SK-N-SH (cell line): ENCODE measurements at regions of chr10 and their contacts with region 1.

Region 1: DNA sequence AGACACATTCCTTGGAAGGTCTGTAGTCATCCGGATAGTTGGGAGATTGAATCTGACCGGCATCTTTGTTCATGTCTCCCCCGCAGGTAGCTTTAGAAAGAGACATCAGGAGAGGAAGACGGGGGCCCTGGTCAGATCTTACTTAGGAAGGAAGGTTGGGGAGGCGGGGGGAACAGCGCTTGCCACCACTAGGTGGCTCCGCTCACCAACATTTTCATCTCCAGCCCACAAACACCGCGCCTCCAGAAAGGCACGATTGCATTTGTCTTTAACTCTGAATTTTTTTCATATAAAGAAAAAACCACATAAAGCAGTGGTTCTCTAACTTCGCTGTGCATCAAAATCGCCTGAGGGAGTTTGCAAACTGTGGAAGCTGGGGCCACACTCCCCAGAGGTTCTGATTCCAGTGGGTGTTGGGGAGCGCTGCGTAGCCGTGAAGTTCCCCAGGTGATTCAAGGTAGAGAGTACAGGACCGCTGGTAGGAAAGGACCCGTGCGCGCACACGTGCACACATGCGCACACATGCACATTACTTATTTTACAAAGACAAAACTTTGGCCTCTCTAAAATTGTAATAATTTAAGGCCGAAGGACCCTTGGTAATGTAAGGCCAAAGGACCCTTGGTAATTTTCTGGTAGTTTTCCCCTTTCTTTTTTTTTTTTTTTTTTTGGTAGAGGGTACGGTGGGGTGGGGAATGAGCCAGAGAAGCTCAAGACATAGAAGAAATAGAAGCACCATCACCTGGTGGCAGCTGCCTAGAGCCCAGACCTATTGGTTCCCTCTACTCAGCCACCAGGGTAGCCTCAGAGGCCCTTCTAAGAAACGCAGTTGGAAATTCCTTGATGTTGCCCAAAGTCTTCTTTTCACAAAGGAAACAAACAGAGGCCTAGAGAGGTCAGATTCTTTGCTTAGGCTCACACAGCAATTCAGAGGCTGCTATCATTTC is 37.4 kb upstream of the OPALIN start:
- DNase-seq: peak; percentile 87
- H3K4me3 ChIP-seq: no peak overlapping the region
- H3K27ac ChIP-seq: no peak overlapping the region
- H3K4me1 ChIP-seq: no peaks in the 10 kb centered on the region; a peak in 1 of 4 replicates
- H3K27me3 ChIP-seq: peaks cover 25% of the 10 kb centered on the region; the same call in 1 of the 2 replicates
- CTCF ChIP-seq: peak; percentile 90
- EP300 ChIP-seq: no peak
- RAD21 ChIP-seq: peak; percentile 88

Region 2: GRCh38 chr10:96380817-96381216 is 15.4 kb before region 1 on chr10:
- CTCF ChIA-PET with region 1: interaction called, 52 read pairs
- POLR2A ChIA-PET with region 1: no interaction called
- DNase-seq: no peak
- H3K4me3 ChIP-seq: no peak overlapping the region
- H3K27ac ChIP-seq: no peak overlapping the region
- H3K4me1 ChIP-seq: peaks cover 0 to 6% of the 10 kb centered on the region in 2 experiments; a peak in 2 of 4 replicates
- H3K27me3 ChIP-seq: no peaks in the 10 kb centered on the region
- CTCF ChIP-seq: no peak
- EP300 ChIP-seq: no peak
- RAD21 ChIP-seq: no peak

Region 3: GRCh38 chr10:96416643-96417042 is 20.4 kb after region 1 on chr10:
- CTCF ChIA-PET with region 1: interaction called, 101 read pairs
- POLR2A ChIA-PET with region 1: no interaction called
- DNase-seq: no peak
- H3K4me3 ChIP-seq: no peak overlapping the region
- H3K27ac ChIP-seq: no peak overlapping the region
- H3K4me1 ChIP-seq: peaks cover 0 to 21% of the 10 kb centered on the region in 2 experiments; a peak in 1 of 4 replicates
- H3K27me3 ChIP-seq: no peaks in the 10 kb centered on the region; the same call in 1 of the 2 replicates
- CTCF ChIP-seq: no peak
- EP300 ChIP-seq: no peak
- RAD21 ChIP-seq: no peak

Region 4: GRCh38 chr10:96421995-96422924 is 26.1 kb after region 1 on chr10:
- CTCF ChIA-PET with region 1: interaction called, 101 read pairs
- POLR2A ChIA-PET with region 1: no interaction called
- DNase-seq: no peak
- H3K4me3 ChIP-seq: no peak overlapping the region
- H3K27ac ChIP-seq: peak overlapping the region in 1 of 2 experiments; percentile 7; a peak in 1 of 4 replicates
- H3K4me1 ChIP-seq: peaks cover 0 to 17% of the 10 kb centered on the region in 2 experiments; a peak in 1 of 4 replicates
- H3K27me3 ChIP-seq: no peaks in the 10 kb centered on the region
- CTCF ChIP-seq: no peak
- EP300 ChIP-seq: peak in 1 of 2 experiments; percentile 50; a peak in 2 of 4 replicates
- RAD21 ChIP-seq: no peak

Region 5: DNA sequence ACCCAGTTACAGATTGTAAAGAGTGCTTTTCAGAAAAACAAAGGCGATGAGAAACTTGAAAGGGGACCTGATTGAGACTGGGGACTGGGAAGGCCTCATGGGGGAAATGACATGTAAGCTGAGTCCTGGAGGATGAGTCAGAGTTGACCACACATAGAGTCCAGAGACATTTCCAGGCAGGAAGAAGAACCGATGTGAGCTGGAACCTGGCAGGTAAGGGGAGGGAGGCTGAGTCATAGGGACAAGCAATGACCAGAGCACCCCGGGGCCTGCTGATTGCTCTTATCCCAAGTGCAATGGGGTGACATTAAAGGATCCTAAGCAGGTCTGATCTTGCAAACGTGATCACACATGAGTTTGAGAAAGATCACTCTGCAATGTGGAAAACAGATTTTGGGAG is 105.8 kb after region 1 on chr10:
- CTCF ChIA-PET with region 1: interaction called, 14 read pairs
- POLR2A ChIA-PET with region 1: no interaction called
- DNase-seq: no peak
- H3K4me3 ChIP-seq: no peak overlapping the region
- H3K27ac ChIP-seq: no peak overlapping the region
- H3K4me1 ChIP-seq: peaks cover 0 to 4% of the 10 kb centered on the region in 2 experiments; a peak in 1 of 4 replicates
- H3K27me3 ChIP-seq: no peaks in the 10 kb centered on the region
- CTCF ChIP-seq: no peak
- EP300 ChIP-seq: no peak
- RAD21 ChIP-seq: no peak

Region 6: DNA sequence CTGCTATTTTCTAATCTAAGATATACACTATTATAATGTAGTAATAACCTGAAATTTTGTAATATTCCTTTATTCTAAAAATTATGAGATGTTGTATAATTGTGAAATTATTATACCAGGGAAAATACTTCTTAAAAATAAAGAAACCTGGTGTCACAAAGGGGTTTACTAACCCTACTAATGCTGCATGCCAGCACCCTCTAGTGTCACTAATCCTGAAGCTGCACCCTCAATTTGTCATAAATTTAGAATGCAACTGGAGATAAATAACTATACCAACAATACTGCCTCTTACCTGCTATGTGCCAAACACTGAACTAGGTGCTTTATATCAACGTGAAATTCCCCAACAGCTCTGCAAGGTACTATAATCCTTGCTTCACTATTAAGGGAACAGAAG is 159.8 kb after region 1 on chr10:
- CTCF ChIA-PET with region 1: interaction called, 30 read pairs
- POLR2A ChIA-PET with region 1: no interaction called
- DNase-seq: peak; percentile 22
- H3K4me3 ChIP-seq: no peak overlapping the region
- H3K27ac ChIP-seq: no peak overlapping the region
- H3K4me1 ChIP-seq: no peaks in the 10 kb centered on the region
- H3K27me3 ChIP-seq: no peaks in the 10 kb centered on the region
- CTCF ChIP-seq: peak; percentile 58
- EP300 ChIP-seq: no peak
- RAD21 ChIP-seq: peak; percentile 67

Region 7: GRCh38 chr10:96639899-96640298 is 243.7 kb after region 1 on chr10:
- CTCF ChIA-PET with region 1: interaction called, 10 read pairs
- POLR2A ChIA-PET with region 1: no interaction called
- DNase-seq: no peak
- H3K4me3 ChIP-seq: no peak overlapping the region
- H3K27ac ChIP-seq: no peak overlapping the region
- H3K4me1 ChIP-seq: peaks cover 0 to 4% of the 10 kb centered on the region in 2 experiments; a peak in 1 of 4 replicates
- H3K27me3 ChIP-seq: no peaks in the 10 kb centered on the region
- CTCF ChIP-seq: no peak
- EP300 ChIP-seq: no peak
- RAD21 ChIP-seq: no peak